Aorta (tissue), 5 donors: ENCODE measurements at regions of chr18 and their contacts with region 1.

Region 1: DNA sequence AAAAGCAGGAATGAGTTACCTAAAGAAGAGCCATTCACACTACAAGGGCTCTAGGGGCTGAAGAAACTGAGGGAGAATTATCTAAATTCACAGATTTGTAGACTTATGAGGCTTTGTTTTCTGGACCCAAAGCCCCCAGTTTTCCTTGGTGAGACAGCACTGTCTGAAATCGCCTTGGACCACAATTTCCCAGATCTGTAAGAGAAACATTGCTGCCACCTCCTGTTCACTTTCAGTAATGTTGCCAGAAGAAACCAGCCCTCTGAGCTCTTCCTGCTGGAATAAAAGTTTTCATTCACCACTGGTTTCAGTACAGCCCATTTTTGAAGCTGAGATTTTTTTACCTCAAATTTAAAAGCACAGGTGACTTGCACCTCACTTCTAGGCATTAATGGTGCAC is 169.2 kb downstream of the CDH20 start:
- DNase-seq: no peak
- ATAC-seq: peak; percentile 73
- H3K4me3 ChIP-seq: no peak overlapping the region
- H3K27ac ChIP-seq: no peak overlapping the region
- H3K4me1 ChIP-seq: no peaks in the 10 kb centered on the region
- H3K27me3 ChIP-seq: no peaks in the 10 kb centered on the region

Region 2: DNA sequence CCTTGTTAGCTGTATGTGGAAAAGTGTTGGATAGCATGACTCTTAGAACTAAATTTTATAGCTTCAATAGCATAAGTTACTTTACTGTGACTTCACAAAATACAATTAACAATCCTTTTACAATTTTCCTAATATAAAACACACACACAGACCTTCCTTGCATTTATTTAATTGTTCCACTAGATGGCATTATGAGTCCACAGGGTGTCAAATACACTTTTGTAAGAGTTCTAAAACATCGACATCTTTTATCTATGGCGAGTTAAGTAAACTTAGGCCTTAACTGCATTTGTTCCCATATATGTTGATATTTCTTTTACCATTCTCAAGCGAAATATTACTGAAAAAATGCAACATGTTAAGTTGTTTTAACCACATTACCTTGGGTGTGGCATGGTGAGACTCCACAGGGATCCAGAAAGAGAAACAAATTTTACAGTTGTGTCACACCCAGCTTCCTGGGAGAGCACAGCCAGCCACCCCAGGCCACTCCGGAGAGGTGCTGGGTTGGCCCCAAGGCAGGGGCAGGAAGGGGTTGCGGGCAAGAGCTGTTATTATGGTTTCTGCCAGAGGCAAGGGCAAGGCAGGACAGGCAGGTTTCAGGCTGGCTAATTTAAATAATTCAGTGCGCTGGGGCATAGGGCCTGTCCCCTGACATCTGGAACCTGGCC is 817.5 kb before region 1 on chr18:
- intact Hi-C with region 1: loop called (anchors 2 kb)
- DNase-seq: no peak
- ATAC-seq: no peak
- H3K4me3 ChIP-seq: no peak overlapping the region
- H3K27ac ChIP-seq: no peak overlapping the region
- H3K4me1 ChIP-seq: no peaks in the 10 kb centered on the region
- H3K27me3 ChIP-seq: no peaks in the 10 kb centered on the region

Region 3: GRCh38 chr18:60809937-60810336 is 692.5 kb before region 1 on chr18:
- intact Hi-C with region 1: loop called (anchors 5 kb)
- DNase-seq: no peak
- ATAC-seq: no peak
- H3K4me3 ChIP-seq: no peak overlapping the region
- H3K27ac ChIP-seq: no peak overlapping the region
- H3K4me1 ChIP-seq: no peaks in the 10 kb centered on the region
- H3K27me3 ChIP-seq: no peaks in the 10 kb centered on the region

Region 4: DNA sequence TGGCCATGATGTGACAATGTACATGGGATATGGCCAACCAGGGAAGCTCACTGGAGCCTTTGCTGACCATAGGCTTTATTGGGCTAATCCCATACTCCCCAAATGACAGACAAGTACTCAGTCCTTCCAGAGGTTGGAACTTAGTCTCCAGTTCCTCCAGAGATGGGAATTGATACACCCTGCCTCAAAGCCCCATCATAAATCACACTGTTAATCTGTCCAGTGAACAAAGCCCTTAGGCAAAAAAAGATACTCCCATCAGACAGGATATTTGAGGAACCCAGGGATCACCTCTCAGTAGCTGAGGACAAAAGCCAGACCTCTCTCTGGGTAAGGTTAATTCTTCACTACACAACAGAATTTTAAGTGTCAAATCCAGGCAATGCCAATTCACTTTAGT is 416.7 kb before region 1 on chr18:
- intact Hi-C with region 1: loop called in 1 of 2 experiments (anchors 10 kb)
- DNase-seq: no peak
- ATAC-seq: no peak
- H3K4me3 ChIP-seq: no peak overlapping the region
- H3K27ac ChIP-seq: no peak overlapping the region
- H3K4me1 ChIP-seq: no peaks in the 10 kb centered on the region
- H3K27me3 ChIP-seq: no peaks in the 10 kb centered on the region

Region 5: DNA sequence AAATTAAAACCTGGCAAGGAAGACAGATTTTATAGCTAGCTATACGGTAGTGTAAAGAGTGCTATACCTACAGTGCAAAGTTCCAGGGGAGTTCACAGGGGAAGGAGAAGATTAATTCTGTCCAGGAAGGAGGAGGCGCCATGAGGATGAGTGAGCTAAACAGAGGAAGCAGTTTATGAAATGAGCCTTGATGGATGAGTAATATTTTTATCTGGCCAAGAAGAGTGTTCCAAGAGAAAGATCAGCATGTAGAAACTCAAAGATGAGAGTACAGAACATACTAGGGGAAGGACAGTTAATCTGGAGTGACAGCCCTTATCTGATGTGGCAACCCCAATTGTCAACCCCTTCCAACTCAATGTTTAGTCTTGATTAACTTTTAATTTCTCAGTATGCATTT is 114.5 kb before region 1 on chr18:
- intact Hi-C with region 1: no loop called
- DNase-seq: no peak
- ATAC-seq: peak; percentile 38
- H3K4me3 ChIP-seq: no peak overlapping the region
- H3K27ac ChIP-seq: no peak overlapping the region
- H3K4me1 ChIP-seq: no peaks in the 10 kb centered on the region
- H3K27me3 ChIP-seq: no peaks in the 10 kb centered on the region

Region 6: GRCh38 chr18:61459896-61460648 is 42.4 kb before region 1 on chr18:
- intact Hi-C with region 1: no loop called
- DNase-seq: no peak
- ATAC-seq: no peak
- H3K4me3 ChIP-seq: no peak overlapping the region
- H3K27ac ChIP-seq: no peak overlapping the region
- H3K4me1 ChIP-seq: no peaks in the 10 kb centered on the region
- H3K27me3 ChIP-seq: no peaks in the 10 kb centered on the region